Panc1 (cell line): ENCODE measurements at regions of chr4 and their contacts with region 1.

Region 1: DNA sequence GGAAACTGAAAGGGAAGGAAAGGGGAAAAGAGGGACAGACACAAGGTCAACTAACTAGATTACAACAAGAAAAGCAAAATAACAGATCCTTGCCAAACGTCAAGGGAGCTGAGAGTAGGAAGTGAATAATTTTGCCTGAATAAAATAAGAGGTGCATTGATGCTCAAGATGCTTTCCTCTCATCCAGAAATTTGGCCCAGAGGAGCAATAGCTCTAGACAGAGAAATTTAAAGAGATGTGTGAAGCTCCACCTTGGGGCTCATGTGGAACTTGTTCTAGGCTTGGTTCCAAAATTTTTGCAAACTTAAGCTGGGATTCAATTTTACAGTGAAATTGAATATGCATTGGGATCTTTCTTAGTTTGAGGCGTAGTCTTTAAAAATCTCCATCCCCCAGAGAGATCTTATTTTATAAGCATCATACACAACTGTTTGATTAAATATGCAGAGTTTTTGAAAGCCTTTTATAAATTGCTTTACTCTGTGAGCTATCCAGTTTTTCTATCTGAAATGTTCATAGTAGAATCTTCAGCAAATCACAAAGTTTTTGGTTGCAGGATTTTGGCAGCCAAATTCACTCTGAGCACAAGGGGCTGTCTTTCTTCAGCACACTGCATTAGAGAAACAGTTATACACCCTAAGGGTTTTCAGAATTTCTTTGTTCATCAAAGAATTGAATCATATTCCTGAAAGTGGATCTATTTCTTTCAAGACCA is 1159.5 kb downstream of the ADGRL3 start:
- DNase-seq: no peak
- ATAC-seq: no peak
- H3K4me3 ChIP-seq: no peak overlapping the region
- H3K27ac ChIP-seq: no peak overlapping the region
- H3K4me1 ChIP-seq: no peaks in the 10 kb centered on the region
- H3K27me3 ChIP-seq: no peaks in the 10 kb centered on the region
- CTCF ChIP-seq: no peak

Region 2: GRCh38 chr4:62377700-62378099 is 18.1 kb after region 1 on chr4:
- CTCF ChIA-PET with region 1: no interaction called
- POLR2A ChIA-PET with region 1: no interaction called
- in situ Hi-C with region 1: no loop called
- intact Hi-C with region 1: no loop called
- DNase-seq: no peak
- ATAC-seq: no peak
- H3K4me3 ChIP-seq: no peak overlapping the region
- H3K27ac ChIP-seq: no peak overlapping the region
- H3K4me1 ChIP-seq: no peaks in the 10 kb centered on the region
- H3K27me3 ChIP-seq: no peaks in the 10 kb centered on the region
- CTCF ChIP-seq: no peak

Region 3: DNA sequence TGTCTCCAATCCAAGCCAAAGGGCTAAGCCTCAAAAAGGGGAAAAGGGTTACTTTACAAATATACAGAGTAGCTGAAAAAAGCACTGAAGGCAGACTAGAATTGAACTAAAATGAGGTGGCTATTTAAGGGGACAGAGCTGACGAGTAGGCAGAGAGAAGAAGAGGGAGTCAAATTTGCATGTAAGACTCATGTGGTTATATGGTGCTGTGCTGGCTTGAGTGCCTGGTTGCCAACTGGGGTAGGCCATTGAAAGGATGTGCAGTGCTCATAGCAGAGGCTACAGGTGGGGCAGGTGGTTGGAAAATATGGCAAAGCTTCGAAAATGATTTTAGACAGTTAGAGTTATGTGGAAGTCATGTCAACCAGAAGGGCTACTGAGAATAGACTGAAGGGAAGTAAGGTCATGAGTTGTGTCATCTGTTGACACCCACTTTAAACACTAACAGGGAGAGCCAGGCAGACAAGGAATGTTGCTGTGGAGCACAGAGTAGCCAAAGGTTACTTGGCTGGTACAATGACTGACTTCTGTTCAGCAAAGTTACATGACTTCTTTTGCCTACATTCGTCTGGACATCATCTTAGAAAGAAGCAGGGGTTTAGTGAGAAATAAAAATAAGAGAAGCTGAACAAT is 50.9 kb after region 1 on chr4:
- CTCF ChIA-PET with region 1: no interaction called
- POLR2A ChIA-PET with region 1: no interaction called
- in situ Hi-C with region 1: no loop called
- intact Hi-C with region 1: loop called (anchors 10 kb)
- DNase-seq: no peak
- ATAC-seq: no peak
- H3K4me3 ChIP-seq: no peak overlapping the region
- H3K27ac ChIP-seq: no peak overlapping the region
- H3K4me1 ChIP-seq: no peaks in the 10 kb centered on the region
- H3K27me3 ChIP-seq: no peaks in the 10 kb centered on the region
- CTCF ChIP-seq: no peak

Region 4: DNA sequence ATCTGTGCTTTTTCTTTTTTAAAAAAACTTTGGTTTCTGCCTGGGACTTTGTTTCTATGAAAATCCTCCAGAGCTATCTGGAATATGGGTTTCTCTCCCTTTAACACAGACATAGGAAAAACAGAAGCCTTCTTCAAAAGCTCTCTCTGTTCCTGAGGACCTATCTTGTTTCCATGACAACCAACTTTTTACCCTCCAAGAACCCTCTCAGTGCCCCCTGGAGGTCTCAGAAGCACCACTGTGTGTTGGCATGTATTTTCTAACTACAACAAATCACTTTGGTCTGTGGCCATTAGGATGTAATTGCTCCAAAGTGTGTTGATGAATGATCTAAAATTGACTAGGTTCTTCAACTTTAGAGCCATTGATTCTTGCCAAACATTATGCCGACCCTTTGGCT is 172.1 kb after region 1 on chr4:
- CTCF ChIA-PET with region 1: no interaction called
- POLR2A ChIA-PET with region 1: no interaction called
- in situ Hi-C with region 1: no loop called
- intact Hi-C with region 1: no loop called
- DNase-seq: no peak
- ATAC-seq: no peak
- H3K4me3 ChIP-seq: no peak overlapping the region
- H3K27ac ChIP-seq: no peak overlapping the region
- H3K4me1 ChIP-seq: no peaks in the 10 kb centered on the region
- H3K27me3 ChIP-seq: no peaks in the 10 kb centered on the region
- CTCF ChIP-seq: no peak